Heart left ventricle (tissue), 16 donors: ENCODE measurements at regions of chr4 and their contacts with region 1.

Region 1: GRCh38 chr4:150152766-150153165 is 74.5 kb downstream of the DCLK2 start:
- DNase-seq: no peak
- ATAC-seq: no peak
- H3K4me3 ChIP-seq: no peak overlapping the region
- H3K27ac ChIP-seq: no peak overlapping the region
- H3K4me1 ChIP-seq: peaks cover 0 to 42% (median 13%) of the 10 kb centered on the region in 12 donors
- H3K27me3 ChIP-seq: no peaks in the 10 kb centered on the region
- CTCF ChIP-seq: no peak
- POLR2A ChIP-seq: no peak

Region 2: GRCh38 chr4:150098214-150098613 is 54.6 kb before region 1 on chr4:
- intact Hi-C with region 1: loop called in 1 of 10 experiments (anchors 10 kb)
- DNase-seq: no peak
- ATAC-seq: peak in 3 of 4 donors; percentile 41 to 50 (median 42)
- H3K4me3 ChIP-seq: no peak overlapping the region
- H3K27ac ChIP-seq: no peak overlapping the region
- H3K4me1 ChIP-seq: no peaks in the 10 kb centered on the region
- H3K27me3 ChIP-seq: no peaks in the 10 kb centered on the region
- CTCF ChIP-seq: no peak
- POLR2A ChIP-seq: no peak

Region 3: DNA sequence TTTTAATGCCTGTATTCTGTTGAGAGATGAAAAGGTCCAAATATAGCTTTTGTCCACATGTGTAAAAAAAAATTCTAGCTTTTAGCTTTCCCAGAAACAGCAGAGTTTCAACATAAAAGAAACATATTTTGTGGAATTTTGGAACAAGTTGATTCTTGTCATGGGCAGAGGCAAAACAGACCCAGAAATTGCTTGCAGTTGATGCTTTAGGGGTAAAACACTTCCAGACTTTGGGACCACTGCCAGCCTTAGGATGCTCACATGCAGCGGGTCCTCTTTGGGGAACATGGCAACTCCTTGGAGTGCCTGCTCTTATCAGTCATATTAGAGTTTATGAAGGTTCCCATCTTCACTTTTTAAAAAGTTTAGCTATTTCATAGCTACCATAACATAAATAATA is 44.1 kb before region 1 on chr4:
- intact Hi-C with region 1: no loop called
- DNase-seq: no peak
- ATAC-seq: no peak
- H3K4me3 ChIP-seq: no peak overlapping the region
- H3K27ac ChIP-seq: no peak overlapping the region
- H3K4me1 ChIP-seq: peaks cover 0 to 4% (median 0%) of the 10 kb centered on the region in 12 donors
- H3K27me3 ChIP-seq: no peaks in the 10 kb centered on the region
- CTCF ChIP-seq: no peak
- POLR2A ChIP-seq: no peak

Region 4: GRCh38 chr4:150217192-150217591 is 64.4 kb after region 1 on chr4:
- intact Hi-C with region 1: no loop called
- DNase-seq: no peak
- ATAC-seq: peak in 3 of 4 donors; percentile 51 to 63 (median 52)
- H3K4me3 ChIP-seq: no peak overlapping the region
- H3K27ac ChIP-seq: no peak overlapping the region
- H3K4me1 ChIP-seq: peaks cover 0 to 27% (median 5%) of the 10 kb centered on the region in 12 donors
- H3K27me3 ChIP-seq: no peaks in the 10 kb centered on the region
- CTCF ChIP-seq: peak in 9 of 12 donors; percentile 13 to 49 (median 25)
- POLR2A ChIP-seq: no peak

Region 5: GRCh38 chr4:150355858-150356455 is 203.2 kb after region 1 on chr4:
- intact Hi-C with region 1: no loop called
- DNase-seq: no peak
- ATAC-seq: no peak
- H3K4me3 ChIP-seq: no peak overlapping the region
- H3K27ac ChIP-seq: no peak overlapping the region
- H3K4me1 ChIP-seq: no peaks in the 10 kb centered on the region
- H3K27me3 ChIP-seq: no peaks in the 10 kb centered on the region
- CTCF ChIP-seq: no peak
- POLR2A ChIP-seq: no peak